ENCODE measurements at regions of chr2 and their contacts with region 1.

Region 1: GRCh38 chr2:206249714-206250591 is 24.5 kb upstream of the ZDBF2 start:
- DNase-seq: peak; percentile 38
- ATAC-seq: no peak
- H3K4me3 ChIP-seq: peak overlapping the region; percentile 16 to 43 (median 39)
- H3K4me3 Mint-ChIP-seq: peak overlapping the region; percentile 85
- H3K27ac ChIP-seq: no peak overlapping the region
- H3K27ac Mint-ChIP-seq: peak overlapping the region; percentile 5
- H3K4me1 ChIP-seq: peaks cover 12 to 30% of the 10 kb centered on the region in 2 donors
- H3K4me1 Mint-ChIP-seq: peaks cover 26% of the 10 kb centered on the region
- H3K27me3 ChIP-seq: peaks cover 0 to 37% (median 26%) of the 10 kb centered on the region in 4 experiments
- H3K27me3 Mint-ChIP-seq: peaks cover 38% of the 10 kb centered on the region
- CTCF ChIP-seq: no peak

Region 2: GRCh38 chr2:206212673-206213513 is 37.1 kb before region 1 on chr2:
- CTCF ChIA-PET with region 1: no interaction called
- POLR2A ChIA-PET with region 1: interaction called, 14 read pairs
- intact Hi-C with region 1: no loop called
- DNase-seq: no peak
- ATAC-seq: no peak
- H3K4me3 ChIP-seq: no peak overlapping the region
- H3K4me3 Mint-ChIP-seq: no peak overlapping the region
- H3K27ac ChIP-seq: no peak overlapping the region
- H3K27ac Mint-ChIP-seq: no peak overlapping the region
- H3K4me1 ChIP-seq: no peaks in the 10 kb centered on the region
- H3K4me1 Mint-ChIP-seq: no peaks in the 10 kb centered on the region
- H3K27me3 ChIP-seq: peaks cover 0 to 8% (median 5%) of the 10 kb centered on the region in 4 experiments
- H3K27me3 Mint-ChIP-seq: peaks cover 27% of the 10 kb centered on the region
- CTCF ChIP-seq: no peak

Region 3: DNA sequence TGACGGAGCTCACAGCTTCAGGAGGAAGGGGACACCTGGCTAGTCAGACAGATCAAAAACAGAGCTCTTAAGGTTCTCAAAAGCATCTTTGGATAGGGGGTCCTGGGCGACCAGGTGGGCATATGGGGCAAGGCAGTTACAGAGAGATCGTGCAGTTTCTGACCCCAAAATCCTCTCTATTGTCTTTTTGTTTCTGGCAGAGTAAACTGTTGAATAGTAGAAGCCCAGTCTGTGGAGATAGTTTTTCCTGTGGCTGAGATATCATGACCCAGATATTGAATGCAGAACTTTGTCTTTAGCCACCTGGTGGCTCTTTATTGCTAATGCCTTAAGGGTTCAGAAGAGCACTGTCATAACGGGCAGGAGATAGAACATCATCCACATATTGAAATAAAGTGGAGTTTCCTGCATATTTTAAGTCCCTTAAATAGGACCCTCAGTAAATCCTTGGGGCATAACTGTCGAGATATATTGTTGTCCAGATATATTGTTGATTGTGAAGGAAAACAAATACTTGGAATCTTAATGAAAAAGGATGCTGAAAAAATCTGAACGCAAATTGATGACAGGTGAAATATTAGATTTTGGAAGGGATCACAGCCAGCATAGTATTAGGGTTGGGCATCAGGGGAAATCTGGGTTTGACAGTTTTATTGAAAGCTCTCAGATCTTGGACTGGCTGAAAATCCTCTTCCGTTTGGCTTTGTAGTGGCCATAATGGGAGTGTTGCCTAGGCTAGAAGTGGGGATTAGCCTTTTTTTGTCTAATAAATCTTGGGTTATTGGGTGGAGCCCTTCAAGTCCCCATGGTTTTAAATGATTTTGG is 10.4 kb after region 1 on chr2:
- CTCF ChIA-PET with region 1: interaction called, 4 read pairs
- POLR2A ChIA-PET with region 1: no interaction called
- intact Hi-C with region 1: loop called (anchors 2 kb)
- DNase-seq: peak; percentile 53
- ATAC-seq: peak; percentile 43
- H3K4me3 ChIP-seq: no peak overlapping the region
- H3K4me3 Mint-ChIP-seq: no peak overlapping the region
- H3K27ac ChIP-seq: no peak overlapping the region
- H3K27ac Mint-ChIP-seq: no peak overlapping the region
- H3K4me1 ChIP-seq: peaks cover 12% of the 10 kb centered on the region in 2 donors
- H3K4me1 Mint-ChIP-seq: peaks cover 16% of the 10 kb centered on the region
- H3K27me3 ChIP-seq: peaks cover 0 to 81% (median 60%) of the 10 kb centered on the region in 4 experiments
- H3K27me3 Mint-ChIP-seq: peaks cover 63% of the 10 kb centered on the region
- CTCF ChIP-seq: peak; percentile 59

Region 4: DNA sequence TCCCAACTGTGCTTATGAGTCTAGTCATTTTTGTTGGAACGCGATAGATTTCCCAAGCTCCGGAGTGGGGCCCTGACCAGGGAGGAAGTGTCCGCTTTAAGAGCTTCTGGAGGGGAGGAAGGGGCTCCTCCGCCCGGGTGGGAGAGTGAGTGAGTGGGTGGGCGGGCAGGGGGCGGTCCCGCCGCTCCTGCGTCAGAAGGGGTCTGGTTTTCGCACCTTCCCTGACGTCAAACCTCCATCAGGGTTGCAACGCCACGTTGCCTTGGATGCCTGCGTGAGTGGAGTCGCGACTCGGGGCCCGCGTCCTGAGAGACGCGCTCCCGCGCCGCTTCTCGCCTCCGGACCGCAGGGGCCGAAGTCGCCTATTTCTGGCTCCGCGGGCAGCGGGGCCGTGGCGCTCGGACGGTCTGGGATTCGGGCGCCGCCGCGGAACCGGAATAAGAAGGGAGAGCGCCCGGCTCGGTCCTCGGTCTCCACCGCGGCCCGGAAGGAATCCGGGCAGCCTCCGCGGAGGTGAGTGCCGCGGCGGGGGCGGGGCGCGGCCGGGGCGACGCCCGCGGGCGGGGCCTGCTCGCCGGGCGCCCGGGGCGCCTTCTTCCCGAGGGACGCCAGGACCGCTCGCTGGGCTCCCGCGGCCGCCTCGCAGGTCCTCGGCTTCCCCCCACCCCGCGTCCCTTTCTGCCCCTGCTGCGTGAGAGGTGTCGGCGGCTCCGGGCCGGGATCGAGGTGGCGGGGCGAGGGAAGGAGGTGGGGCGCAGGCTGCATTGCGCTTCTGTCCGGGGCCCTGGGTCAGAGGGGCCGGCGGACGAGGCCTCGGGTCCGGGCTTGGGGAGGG is 24.7 kb after region 1 on chr2 and contains the start of gene ZDBF2:
- CTCF ChIA-PET with region 1: interaction called, 3 read pairs
- POLR2A ChIA-PET with region 1: no interaction called
- intact Hi-C with region 1: loop called (anchors 2 kb)
- DNase-seq: peak; percentile 76
- ATAC-seq: peak; percentile 83
- H3K4me3 ChIP-seq: peak within 1 kb of the TSS; percentile 66 to 70 (median 67)
- H3K4me3 Mint-ChIP-seq: peak within 1 kb of the TSS; percentile 77
- H3K27ac ChIP-seq: peak within 1 kb of the TSS; percentile 39 to 78
- H3K27ac Mint-ChIP-seq: peak within 1 kb of the TSS; percentile 79
- H3K4me1 ChIP-seq: peaks cover 19 to 22% of the 10 kb centered on the region in 2 donors
- H3K4me1 Mint-ChIP-seq: peaks cover 18% of the 10 kb centered on the region
- H3K27me3 ChIP-seq: peaks cover 0 to 55% (median 24%) of the 10 kb centered on the region in 4 experiments
- H3K27me3 Mint-ChIP-seq: peaks cover 50% of the 10 kb centered on the region
- CTCF ChIP-seq: no peak
- total RNA-seq, gene ZDBF2: 16.5 and 18.7 TPM in 2 replicates